Left ventricle myocardium inferior (tissue), 1 donor: ENCODE measurements at regions of chr6 and their contacts with region 1.

Region 1: GRCh38 chr6:56359201-56359899 is 112.0 kb upstream of the COL21A1 start:
- DNase-seq: no peak
- H3K4me3 ChIP-seq: no peak overlapping the region
- H3K27ac ChIP-seq: no peak overlapping the region
- H3K4me1 ChIP-seq: peaks cover 19% of the 10 kb centered on the region
- H3K27me3 ChIP-seq: no peaks in the 10 kb centered on the region
- CTCF ChIP-seq: peak; percentile 89

Region 2: DNA sequence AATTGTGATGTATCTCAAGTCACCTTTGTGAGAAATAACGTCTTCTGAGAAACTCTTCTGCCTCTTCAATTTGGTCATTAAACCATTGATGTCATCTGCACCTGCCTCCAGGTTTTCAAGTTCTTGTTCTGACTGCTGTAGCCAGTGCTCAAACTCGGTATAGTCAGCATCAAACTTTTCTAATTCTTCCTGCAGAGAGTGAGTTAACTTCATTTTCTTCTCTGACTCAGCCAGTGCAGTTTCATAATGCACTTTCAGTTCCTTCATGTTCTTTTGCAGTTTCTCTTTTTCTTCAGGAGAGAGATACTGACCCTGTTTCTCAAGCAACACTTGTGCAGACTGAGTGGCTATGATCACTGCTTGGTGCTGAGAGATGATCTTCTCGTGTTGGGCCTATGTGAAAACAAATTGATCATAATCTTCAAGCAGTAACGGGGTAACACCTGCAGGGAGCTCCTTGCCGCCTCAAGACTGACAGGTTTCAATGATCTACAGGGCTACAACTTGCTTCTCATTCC is 234.5 kb after region 1 on chr6:
- intact Hi-C with region 1: loop called (anchors 5 kb)
- DNase-seq: no peak
- H3K4me3 ChIP-seq: no peak overlapping the region
- H3K27ac ChIP-seq: no peak overlapping the region
- H3K4me1 ChIP-seq: peaks cover 5% of the 10 kb centered on the region
- H3K27me3 ChIP-seq: no peaks in the 10 kb centered on the region
- CTCF ChIP-seq: no peak